Ascending aorta (tissue), 2 donors: ENCODE measurements at regions of chr1 and their contacts with region 1.

Region 1: GRCh38 chr1:94115900-94116436 is 5.0 kb downstream of the ABCA4 start:
- DNase-seq: peak in 1 of 2 donors; percentile 40
- H3K4me3 ChIP-seq: no peak overlapping the region
- H3K27ac ChIP-seq: no peak overlapping the region
- H3K4me1 ChIP-seq: no peaks in the 10 kb centered on the region
- H3K27me3 ChIP-seq: no peaks in the 10 kb centered on the region
- CTCF ChIP-seq: no peak

Region 2: DNA sequence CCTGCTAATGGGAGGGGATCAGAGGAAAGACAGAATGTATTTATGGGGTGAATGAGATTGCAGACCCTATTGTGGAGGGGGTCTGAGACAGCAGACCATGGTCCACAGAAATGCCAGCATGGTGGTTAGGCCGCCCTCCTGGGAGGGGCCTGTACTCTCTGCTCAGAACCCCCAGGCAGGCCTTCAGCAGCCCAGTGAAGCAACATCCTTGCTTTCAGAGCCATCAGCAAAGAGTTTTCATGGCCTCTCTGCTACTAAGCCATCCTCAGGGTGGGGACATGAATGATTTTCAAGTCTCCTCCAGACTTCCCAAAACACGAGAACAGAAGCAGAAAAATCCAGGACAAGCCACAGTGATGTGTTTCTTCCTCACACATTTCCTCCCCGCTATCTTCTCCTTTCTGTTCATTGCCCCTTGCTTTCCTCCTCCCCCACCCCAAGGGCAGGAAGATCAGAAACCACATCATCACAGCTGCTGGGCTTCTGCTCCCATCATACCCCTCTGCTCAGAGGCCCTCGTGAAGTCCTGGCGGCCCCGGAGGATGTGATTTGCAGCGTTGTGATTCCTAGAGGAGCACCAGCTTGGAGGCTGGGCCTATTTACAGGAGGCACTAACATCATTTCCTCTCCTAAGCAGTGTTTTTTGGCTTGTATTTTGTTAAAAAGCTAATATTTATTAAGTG is 43.0 kb before region 1 on chr1:
- intact Hi-C with region 1: loop called (anchors 5 kb)
- DNase-seq: no peak
- H3K4me3 ChIP-seq: no peak overlapping the region
- H3K27ac ChIP-seq: no peak overlapping the region
- H3K4me1 ChIP-seq: peaks cover 0 to 2% of the 10 kb centered on the region in 2 donors
- H3K27me3 ChIP-seq: no peaks in the 10 kb centered on the region
- CTCF ChIP-seq: no peak

Region 3: GRCh38 chr1:94693029-94693428 is 577.1 kb after region 1 on chr1:
- intact Hi-C with region 1: no loop called
- DNase-seq: no peak
- H3K4me3 ChIP-seq: no peak overlapping the region
- H3K27ac ChIP-seq: no peak overlapping the region
- H3K4me1 ChIP-seq: peaks cover 2 to 13% of the 10 kb centered on the region in 2 donors
- H3K27me3 ChIP-seq: no peaks in the 10 kb centered on the region
- CTCF ChIP-seq: no peak